ENCODE measurements at regions of chr1 and their contacts with region 1.

Region 1: GRCh38 chr1:234107416-234108021 is 203.0 kb downstream of the SLC35F3 start:
- DNase-seq: no peak

Region 2: GRCh38 chr1:234125283-234125682 is 17.8 kb after region 1 on chr1:
- CTCF ChIA-PET with region 1: interaction called, 10 read pairs
- POLR2A ChIA-PET with region 1: interaction called, 3 read pairs
- DNase-seq: peak; percentile 84

Measured in HEK293T (cell line).